ENCODE measurements at regions of chr3 and their contacts with region 1.

Region 1: GRCh38 chr3:50350527-50351322 is at the starts of genes CYB561D2 and NPRL2:
- DNase-seq: peak; percentile 99
- ATAC-seq: peak; percentile 89
- H3K4me3 Mint-ChIP-seq: peak within 1 kb of the TSS; percentile 97
- H3K27ac Mint-ChIP-seq: peak within 1 kb of the TSS; percentile 99
- H3K4me1 Mint-ChIP-seq: peaks cover 60% of the 10 kb centered on the region
- H3K27me3 Mint-ChIP-seq: no peaks in the 10 kb centered on the region
- CTCF ChIP-seq: no peak
- total RNA-seq, gene CYB561D2: 22.9 and 26.0 TPM in 2 replicates
- total RNA-seq, gene NPRL2: 23.6 and 26.4 TPM in 2 replicates

Region 2: GRCh38 chr3:50192689-50193141 is 158.0 kb before region 1 on chr3:
- CTCF ChIA-PET with region 1: no interaction called
- POLR2A ChIA-PET with region 1: no interaction called
- intact Hi-C with region 1: no loop called
- DNase-seq: peak; percentile 82
- ATAC-seq: peak; percentile 72
- H3K4me3 Mint-ChIP-seq: no peak overlapping the region
- H3K27ac Mint-ChIP-seq: no peak overlapping the region
- H3K4me1 Mint-ChIP-seq: peaks cover 18% of the 10 kb centered on the region
- H3K27me3 Mint-ChIP-seq: peaks cover 11% of the 10 kb centered on the region
- CTCF ChIP-seq: no peak

Region 3: DNA sequence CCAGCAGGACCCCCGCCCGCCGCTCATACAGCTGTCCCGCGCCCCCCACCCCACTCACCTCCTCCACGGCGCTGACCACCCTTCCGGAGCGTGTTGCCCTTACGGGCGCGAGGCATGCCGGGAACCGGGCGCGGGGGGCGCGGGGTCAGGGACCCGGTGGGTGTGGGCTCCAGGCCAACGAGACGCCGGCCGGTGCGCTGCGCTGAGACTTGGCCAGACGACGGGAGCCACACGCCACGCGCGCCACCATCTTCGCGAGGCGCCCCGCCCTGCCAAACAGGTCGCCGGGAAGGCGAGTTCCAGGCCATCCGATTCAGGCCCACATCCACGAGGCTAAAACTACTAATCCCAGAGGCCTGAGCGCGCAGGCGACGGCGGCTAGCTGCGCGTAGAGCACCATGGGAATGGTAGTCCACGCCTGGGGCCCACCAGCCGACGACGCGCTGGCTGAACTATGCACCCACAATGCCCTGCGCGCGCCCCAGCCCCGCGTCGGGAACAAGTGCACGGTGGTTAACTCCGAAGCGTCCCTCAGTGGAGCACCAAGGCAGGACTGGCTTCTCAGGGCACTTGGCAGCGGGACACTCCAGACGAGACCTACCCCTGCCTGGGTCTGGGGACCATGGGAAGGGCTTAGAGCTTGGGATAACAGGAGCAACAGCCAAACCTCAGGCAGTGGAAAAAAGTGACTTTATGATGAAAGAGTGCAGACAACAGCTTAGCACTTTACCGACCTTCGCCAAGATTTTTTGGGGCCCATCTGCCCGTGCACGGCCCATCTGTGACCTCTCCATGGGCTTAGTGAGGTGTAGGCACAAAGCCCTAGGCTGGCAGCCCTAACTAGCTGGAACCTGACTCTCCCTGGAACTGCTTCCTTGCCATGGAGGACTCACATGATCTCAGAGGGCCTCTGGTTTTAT is 58.3 kb before region 1 on chr3 and contains the start of gene IFRD2:
- CTCF ChIA-PET with region 1: no interaction called
- POLR2A ChIA-PET with region 1: interaction called, 6 read pairs
- intact Hi-C with region 1: loop called (anchors 1 kb)
- DNase-seq: peak; percentile 87
- ATAC-seq: peak; percentile 99
- H3K4me3 Mint-ChIP-seq: peak within 1 kb of the TSS; percentile 86
- H3K27ac Mint-ChIP-seq: peak within 1 kb of the TSS; percentile 95
- H3K4me1 Mint-ChIP-seq: peaks cover 20% of the 10 kb centered on the region
- H3K27me3 Mint-ChIP-seq: no peaks in the 10 kb centered on the region
- CTCF ChIP-seq: no peak
- total RNA-seq, gene IFRD2: 92.2 and 105 TPM in 2 replicates

Region 4: GRCh38 chr3:50327943-50328691 is 22.6 kb before region 1 on chr3 and contains the start of gene TUSC2:
- CTCF ChIA-PET with region 1: interaction called, 3 read pairs
- POLR2A ChIA-PET with region 1: interaction called, 21 read pairs
- intact Hi-C with region 1: no loop called
- DNase-seq: peak; percentile 91
- ATAC-seq: peak; percentile 96
- H3K4me3 Mint-ChIP-seq: peak within 1 kb of the TSS; percentile 92
- H3K27ac Mint-ChIP-seq: peak within 1 kb of the TSS; percentile 84
- H3K4me1 Mint-ChIP-seq: peaks cover 25% of the 10 kb centered on the region
- H3K27me3 Mint-ChIP-seq: no peaks in the 10 kb centered on the region
- CTCF ChIP-seq: no peak
- total RNA-seq, gene TUSC2: 32.2 and 33.4 TPM in 2 replicates

Region 5: DNA sequence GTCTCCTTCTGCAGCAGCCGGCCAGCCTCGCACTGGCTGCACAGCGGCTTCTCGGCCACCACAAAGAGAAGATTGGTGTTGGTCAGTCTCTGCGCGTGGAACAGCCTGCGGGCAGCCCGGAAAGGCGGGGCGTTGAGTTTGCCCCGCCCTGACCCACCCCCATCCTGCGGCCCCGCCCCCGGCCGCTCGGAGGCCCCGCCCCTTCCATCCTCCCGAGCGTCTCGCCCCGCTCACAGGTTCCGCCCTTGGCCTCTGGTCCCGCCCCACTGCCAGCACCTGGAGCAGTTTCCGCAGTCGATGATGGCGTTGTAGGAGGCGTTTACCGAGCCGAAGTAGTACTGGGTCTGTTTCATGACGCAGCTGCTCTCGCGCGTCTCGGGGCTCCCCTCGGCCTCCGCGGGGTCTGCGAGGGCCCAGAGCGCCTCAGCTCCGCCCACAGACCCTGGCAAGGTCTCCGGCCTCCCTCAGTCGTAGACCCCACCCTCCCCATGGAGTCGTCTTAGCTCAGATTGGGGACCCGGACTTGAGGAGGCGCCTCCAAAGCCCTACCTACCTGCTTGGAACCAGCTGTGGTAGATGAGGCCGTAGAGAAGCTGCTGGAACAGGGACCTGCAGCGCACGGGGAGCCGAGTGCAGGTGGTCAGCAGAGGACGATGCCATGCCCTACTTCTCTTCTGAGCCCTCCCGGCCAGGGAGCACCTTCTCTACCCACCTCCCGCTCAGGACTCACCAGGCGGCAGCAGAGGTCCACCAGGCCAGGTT is 14.5 kb after region 1 on chr3:
- CTCF ChIA-PET with region 1: no interaction called
- POLR2A ChIA-PET with region 1: interaction called, 21 read pairs
- intact Hi-C with region 1: loop called (anchors 1 kb)
- DNase-seq: peak; percentile 85
- ATAC-seq: peak; percentile 97
- H3K4me3 Mint-ChIP-seq: peak overlapping the region; percentile 85
- H3K27ac Mint-ChIP-seq: peak overlapping the region; percentile 83
- H3K4me1 Mint-ChIP-seq: peaks cover 19% of the 10 kb centered on the region
- H3K27me3 Mint-ChIP-seq: peaks cover 2% of the 10 kb centered on the region
- CTCF ChIP-seq: no peak

Region 6: GRCh38 chr3:50486219-50486888 is 135.6 kb after region 1 on chr3:
- CTCF ChIA-PET with region 1: no interaction called
- POLR2A ChIA-PET with region 1: no interaction called
- intact Hi-C with region 1: no loop called
- DNase-seq: no peak
- ATAC-seq: no peak
- H3K4me3 Mint-ChIP-seq: no peak overlapping the region
- H3K27ac Mint-ChIP-seq: no peak overlapping the region
- H3K4me1 Mint-ChIP-seq: no peaks in the 10 kb centered on the region
- H3K27me3 Mint-ChIP-seq: peaks cover 12% of the 10 kb centered on the region
- CTCF ChIP-seq: no peak

Region 7: GRCh38 chr3:50542177-50543034 is 191.7 kb after region 1 on chr3:
- CTCF ChIA-PET with region 1: interaction called, 64 read pairs
- POLR2A ChIA-PET with region 1: interaction called, 5 read pairs
- intact Hi-C with region 1: no loop called
- DNase-seq: peak; percentile 54
- ATAC-seq: peak; percentile 71
- H3K4me3 Mint-ChIP-seq: no peak overlapping the region
- H3K27ac Mint-ChIP-seq: peak overlapping the region; percentile 41
- H3K4me1 Mint-ChIP-seq: no peaks in the 10 kb centered on the region
- H3K27me3 Mint-ChIP-seq: peaks cover 27% of the 10 kb centered on the region
- CTCF ChIP-seq: peak; percentile 90

Region 8: DNA sequence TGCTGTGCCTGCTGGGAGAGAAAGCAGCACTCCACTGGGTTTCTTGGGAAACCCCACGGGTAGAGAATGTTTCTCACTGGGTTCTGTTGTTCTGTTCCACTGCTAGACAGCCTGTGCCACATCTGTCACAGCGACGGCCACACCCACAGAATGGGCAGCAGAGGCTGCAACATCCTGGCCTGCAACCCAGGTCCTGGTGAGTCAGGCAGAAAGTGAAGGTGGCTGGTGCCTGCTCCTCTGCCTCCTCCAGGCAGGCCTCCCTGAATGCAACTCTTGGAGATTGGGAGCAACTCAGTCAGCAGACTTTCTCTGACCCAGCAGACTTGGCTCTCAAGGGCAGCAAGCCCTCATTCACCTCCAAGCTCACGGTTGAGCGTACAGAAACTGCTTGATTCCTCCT is 203.8 kb after region 1 on chr3:
- CTCF ChIA-PET with region 1: no interaction called
- POLR2A ChIA-PET with region 1: no interaction called
- intact Hi-C with region 1: no loop called
- DNase-seq: no peak
- ATAC-seq: no peak
- H3K4me3 Mint-ChIP-seq: no peak overlapping the region
- H3K27ac Mint-ChIP-seq: no peak overlapping the region
- H3K4me1 Mint-ChIP-seq: no peaks in the 10 kb centered on the region
- H3K27me3 Mint-ChIP-seq: peaks cover 1% of the 10 kb centered on the region
- CTCF ChIP-seq: no peak

Measured in activated B cell treated with CpG ODN at 0.5 μM for 24 hours (primary cell).